Naive thymus-derived CD4-positive, alpha-beta T cell (primary cell): ENCODE measurements at regions of chr16 and their contacts with region 1.

Region 1: DNA sequence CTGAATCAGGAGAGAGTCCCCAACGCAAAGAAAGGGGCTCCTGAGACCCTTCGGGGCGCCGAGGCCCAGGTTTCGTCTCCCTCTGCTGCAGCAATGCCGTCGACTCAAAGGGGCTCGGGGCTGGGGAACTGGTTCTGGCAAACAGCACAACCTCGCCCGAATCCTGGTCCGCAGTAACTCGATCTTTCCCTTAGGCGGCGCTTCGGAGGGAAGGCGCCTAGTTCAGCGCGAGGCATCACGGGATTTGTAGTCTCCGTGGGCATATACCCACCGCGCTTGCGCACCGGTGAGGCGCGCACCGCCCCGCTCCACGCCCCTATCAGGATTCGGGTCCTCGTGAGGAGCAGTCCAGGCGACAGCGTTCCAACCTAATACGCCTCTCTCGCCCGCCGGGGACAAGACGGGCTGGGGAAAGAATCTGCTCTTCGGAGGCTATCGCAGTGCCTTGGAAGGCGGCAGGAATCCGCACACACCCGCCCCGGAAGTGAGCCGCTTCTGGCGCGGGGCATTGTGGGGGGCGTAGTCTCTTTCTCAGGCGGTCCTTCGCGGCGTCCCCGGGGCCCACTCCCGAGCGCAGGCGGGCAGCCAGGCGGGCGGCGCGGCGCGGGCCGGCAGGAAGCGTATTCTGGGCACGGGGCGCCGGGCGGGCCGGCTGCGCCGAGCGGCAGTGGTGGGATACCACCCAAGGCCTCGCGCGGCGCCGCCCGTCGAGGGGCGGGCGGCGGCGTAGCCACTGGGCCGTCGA is at the start of gene THAP11:
- DNase-seq: peak; percentile 91 to 99 (median 96)
- ATAC-seq: peak; percentile 76
- H3K4me3 ChIP-seq: peak within 1 kb of the TSS; percentile 100
- H3K4me3 Mint-ChIP-seq: peak within 1 kb of the TSS; percentile 94 to 97 (median 96)
- H3K27ac ChIP-seq: peak within 1 kb of the TSS; percentile 99
- H3K27ac Mint-ChIP-seq: peak within 1 kb of the TSS; percentile 94 to 98 (median 97)
- H3K4me1 ChIP-seq: peaks cover 34 to 36% of the 10 kb centered on the region in 2 donors
- H3K4me1 Mint-ChIP-seq: peaks cover 18 to 41% (median 36%) of the 10 kb centered on the region in 7 donors
- H3K27me3 ChIP-seq: no peaks in the 10 kb centered on the region
- H3K27me3 Mint-ChIP-seq: no peaks in the 10 kb centered on the region
- total RNA-seq, gene THAP11: 29.0 to 62.7 (median 44.6) TPM

Region 2: GRCh38 chr16:67183627-67184328 is 658.2 kb before region 1 on chr16 and contains the start of gene MATCAP1:
- CTCF ChIA-PET with region 1: no interaction called
- POLR2A ChIA-PET with region 1: interaction called, 4 read pairs
- intact Hi-C with region 1: loop called in 1 of 2 experiments (anchors 1 kb)
- DNase-seq: peak; percentile 90 to 98 (median 96)
- ATAC-seq: peak; percentile 97
- H3K4me3 ChIP-seq: peak within 1 kb of the TSS; percentile 79
- H3K4me3 Mint-ChIP-seq: peak within 1 kb of the TSS in 5 of 10 donors; percentile 48 to 91 (median 86)
- H3K27ac ChIP-seq: peak within 1 kb of the TSS; percentile 97
- H3K27ac Mint-ChIP-seq: peak within 1 kb of the TSS in 2 of 9 donors; percentile 58 to 67
- H3K4me1 ChIP-seq: peaks cover 12 to 15% of the 10 kb centered on the region in 2 donors
- H3K4me1 Mint-ChIP-seq: peaks cover 8 to 24% (median 13%) of the 10 kb centered on the region in 7 donors
- H3K27me3 ChIP-seq: no peaks in the 10 kb centered on the region
- H3K27me3 Mint-ChIP-seq: peaks cover 4 to 15% (median 4%) of the 10 kb centered on the region in 5 donors
- total RNA-seq, gene MATCAP1: 4.3 to 88.1 (median 11.0) TPM

Region 3: DNA sequence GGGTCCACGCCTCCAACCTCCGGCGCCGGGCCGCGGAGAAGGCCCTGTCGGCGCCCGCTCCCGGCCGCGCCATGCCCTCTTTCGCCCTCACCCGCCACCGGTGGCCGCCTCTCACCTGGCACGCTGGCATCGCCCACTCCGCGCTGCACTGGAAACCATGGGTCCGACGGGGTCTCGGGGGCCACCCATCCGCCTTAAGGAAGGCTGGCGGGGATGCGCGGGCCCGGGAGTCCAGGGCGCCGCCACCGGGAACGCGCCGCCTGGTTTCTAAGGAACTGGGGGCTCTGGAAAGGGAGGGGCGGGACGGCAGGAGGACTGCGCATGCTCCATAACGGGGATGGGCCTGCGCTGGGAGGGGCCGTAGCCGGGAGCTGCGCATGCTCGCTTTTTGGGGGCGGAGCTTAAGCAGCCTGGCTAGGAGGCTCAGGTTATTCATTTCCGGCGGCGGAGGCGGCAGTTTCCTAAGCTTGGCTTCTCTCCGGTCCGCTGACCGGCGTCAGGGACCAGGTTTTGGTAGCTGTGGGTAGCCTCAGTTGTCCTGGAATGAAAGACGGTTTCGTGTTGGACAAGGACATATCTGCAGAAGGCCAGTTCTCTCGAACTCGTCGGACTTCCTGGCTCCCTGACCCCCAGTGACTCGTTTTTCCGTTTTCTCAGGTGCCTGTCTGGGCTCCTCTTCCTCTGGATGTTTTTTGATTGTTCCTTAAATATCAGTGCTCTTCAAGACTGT is 122.7 kb before region 1 on chr16 and contains the start of gene GFOD2:
- CTCF ChIA-PET with region 1: no interaction called
- POLR2A ChIA-PET with region 1: no interaction called
- intact Hi-C with region 1: loop called (anchors 1 kb)
- DNase-seq: peak; percentile 94 to 100 (median 96)
- ATAC-seq: peak; percentile 96
- H3K4me3 ChIP-seq: peak within 1 kb of the TSS; percentile 95
- H3K4me3 Mint-ChIP-seq: peak within 1 kb of the TSS; percentile 90 to 99 (median 94)
- H3K27ac ChIP-seq: peak within 1 kb of the TSS; percentile 88
- H3K27ac Mint-ChIP-seq: peak within 1 kb of the TSS; percentile 91 to 99 (median 98)
- H3K4me1 ChIP-seq: peaks cover 15 to 16% of the 10 kb centered on the region in 2 donors
- H3K4me1 Mint-ChIP-seq: peaks cover 19 to 51% (median 39%) of the 10 kb centered on the region in 7 donors
- H3K27me3 ChIP-seq: no peaks in the 10 kb centered on the region
- H3K27me3 Mint-ChIP-seq: no peaks in the 10 kb centered on the region
- total RNA-seq, gene GFOD2: 6.3 to 13.4 (median 11.4) TPM

Region 4: DNA sequence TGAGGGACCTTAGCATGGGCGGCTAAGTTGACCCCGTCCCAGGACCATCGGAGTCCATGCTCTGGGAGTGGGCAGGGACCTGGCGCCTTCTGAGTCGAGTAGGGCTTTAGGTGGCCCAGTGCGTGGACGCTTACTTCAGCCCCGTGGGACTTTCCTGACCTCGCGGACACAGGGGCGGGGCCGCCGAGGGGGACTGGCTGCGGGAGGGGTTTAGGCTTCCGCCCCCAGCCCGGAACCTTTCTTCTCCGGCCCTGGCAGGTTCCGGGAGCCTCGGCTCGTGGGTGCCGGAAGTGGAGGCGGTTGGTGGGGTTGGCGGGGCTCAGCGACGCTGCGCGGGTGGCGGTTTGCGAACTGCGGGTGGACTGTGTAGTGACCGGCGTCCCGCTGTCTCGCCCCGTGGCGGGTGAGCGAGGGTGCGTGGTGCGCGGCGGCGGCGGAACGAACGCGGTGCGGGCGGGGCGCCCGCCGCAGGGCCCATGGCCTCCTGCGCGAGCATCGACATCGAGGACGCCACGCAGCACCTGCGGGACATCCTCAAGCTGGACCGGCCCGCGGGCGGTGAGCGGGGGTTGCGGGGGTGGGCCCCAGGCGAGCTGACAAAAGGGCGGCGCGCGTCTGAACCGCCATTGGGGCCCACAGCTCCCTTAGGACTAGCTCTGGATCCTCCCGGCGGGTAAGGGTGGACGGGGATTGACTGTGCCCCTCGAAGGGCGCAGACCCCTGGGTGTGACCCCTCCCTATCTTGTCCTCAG is 31.0 kb after region 1 on chr16 and contains the start of gene EDC4:
- CTCF ChIA-PET with region 1: interaction called, 4 read pairs
- POLR2A ChIA-PET with region 1: interaction called, 23 read pairs
- intact Hi-C with region 1: loop called (anchors 1 kb)
- DNase-seq: peak; percentile 75 to 96 (median 83)
- ATAC-seq: peak; percentile 96
- H3K4me3 ChIP-seq: peak within 1 kb of the TSS; percentile 88
- H3K4me3 Mint-ChIP-seq: peak within 1 kb of the TSS; percentile 88 to 96 (median 94)
- H3K27ac ChIP-seq: peak within 1 kb of the TSS; percentile 91
- H3K27ac Mint-ChIP-seq: peak within 1 kb of the TSS; percentile 90 to 97 (median 92)
- H3K4me1 ChIP-seq: peaks cover 19 to 30% of the 10 kb centered on the region in 2 donors
- H3K4me1 Mint-ChIP-seq: peaks cover 25 to 41% (median 36%) of the 10 kb centered on the region in 7 donors
- H3K27me3 ChIP-seq: no peaks in the 10 kb centered on the region
- H3K27me3 Mint-ChIP-seq: no peaks in the 10 kb centered on the region
- total RNA-seq, gene EDC4: 103 to 166 (median 122) TPM

Region 5: DNA sequence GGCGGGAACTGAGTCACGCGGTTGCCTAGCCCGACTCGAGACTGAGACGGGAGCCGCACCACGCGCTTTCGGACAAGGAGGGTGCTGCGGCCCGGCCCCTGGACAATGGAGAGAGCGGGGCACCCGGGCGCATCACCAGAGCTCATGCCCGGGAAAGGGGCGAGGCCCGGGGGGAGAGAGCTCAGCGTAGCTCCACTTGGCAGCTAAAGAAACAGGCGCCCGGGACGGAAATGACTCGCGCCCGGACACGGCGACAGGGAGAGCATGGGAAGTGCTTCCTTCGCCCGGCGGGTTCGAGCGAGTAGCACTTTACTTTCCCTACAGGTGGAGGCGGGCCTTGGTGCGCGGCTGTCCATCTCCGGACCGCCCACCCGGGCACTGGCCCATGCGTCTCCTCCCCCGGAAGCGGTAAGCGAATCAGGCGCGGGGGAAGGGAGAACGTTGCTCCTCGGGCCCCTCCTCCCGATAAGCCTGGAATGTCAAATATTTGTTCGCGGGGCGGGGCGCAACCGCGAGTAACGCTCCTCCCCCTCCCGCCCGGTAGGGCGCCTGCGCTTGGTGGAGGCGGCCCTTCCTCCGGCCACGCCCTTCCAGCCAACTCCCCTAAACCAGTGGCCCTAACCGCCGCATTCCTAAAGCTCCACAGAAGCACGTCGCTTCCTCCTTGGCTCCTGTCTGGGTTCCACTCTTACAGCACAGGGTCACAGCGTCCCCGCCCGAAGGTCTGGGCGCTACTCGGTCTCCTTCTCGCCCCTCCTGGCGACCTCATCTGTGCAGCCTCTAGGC is 395.5 kb after region 1 on chr16:
- CTCF ChIA-PET with region 1: no interaction called
- POLR2A ChIA-PET with region 1: no interaction called
- intact Hi-C with region 1: loop called in 1 of 2 experiments (anchors 5 kb)
- DNase-seq: peak; percentile 71 to 90 (median 83)
- ATAC-seq: peak; percentile 88
- H3K4me3 ChIP-seq: peak overlapping the region; percentile 91
- H3K4me3 Mint-ChIP-seq: peak overlapping the region; percentile 90 to 99 (median 96)
- H3K27ac ChIP-seq: peak overlapping the region; percentile 67
- H3K27ac Mint-ChIP-seq: peak overlapping the region; percentile 72 to 95 (median 87)
- H3K4me1 ChIP-seq: peaks cover 6 to 10% of the 10 kb centered on the region in 2 donors
- H3K4me1 Mint-ChIP-seq: peaks cover 23 to 45% (median 34%) of the 10 kb centered on the region in 7 donors
- H3K27me3 ChIP-seq: no peaks in the 10 kb centered on the region
- H3K27me3 Mint-ChIP-seq: peaks cover 0 to 13% (median 0%) of the 10 kb centered on the region in 5 donors